AG04449 (cell line): ENCODE measurements at regions of chr17 and their contacts with region 1.

Region 1: DNA sequence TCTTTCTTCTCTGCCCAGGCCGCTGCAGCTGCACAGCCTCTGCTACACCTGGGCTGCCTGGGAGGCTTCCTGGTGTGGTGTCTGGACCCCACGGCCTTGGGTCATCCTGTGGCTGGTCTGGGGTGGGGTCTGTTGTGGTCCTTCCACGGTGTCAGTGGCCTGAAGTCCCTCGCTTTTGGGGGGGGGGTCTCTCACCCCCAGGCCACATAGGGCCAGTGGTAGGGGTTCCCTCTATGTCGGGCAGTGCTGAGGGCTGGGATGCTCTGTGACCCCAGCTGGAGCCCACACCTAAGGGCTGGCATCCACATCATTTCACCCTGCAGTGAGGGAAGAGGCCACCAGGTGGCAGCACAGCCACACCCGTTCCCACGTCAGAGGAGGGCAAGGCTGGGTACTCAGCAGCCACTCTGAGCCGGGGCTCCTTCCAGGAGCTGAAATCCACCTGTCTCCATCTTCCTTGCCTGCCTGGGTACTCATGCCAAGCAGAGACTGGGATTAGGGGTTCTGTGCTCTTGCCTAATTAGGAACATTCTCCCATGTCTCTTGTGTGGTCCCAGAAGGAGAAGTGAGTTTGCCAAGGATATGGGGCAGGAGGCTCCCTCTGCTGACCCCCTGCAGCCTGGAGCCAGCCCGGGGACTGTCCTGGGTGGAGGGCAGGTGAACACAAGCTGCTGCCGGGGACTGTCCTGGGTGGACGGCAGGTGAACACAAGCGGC is 13.0 kb downstream of the ENGASE start:
- DNase-seq: no peak
- H3K4me3 ChIP-seq: no peak overlapping the region
- CTCF ChIP-seq: peak; percentile 93

Region 2: GRCh38 chr17:79027925-79028813 is 59.4 kb before region 1 on chr17:
- CTCF ChIA-PET with region 1: interaction called, 105 read pairs
- POLR2A ChIA-PET with region 1: no interaction called
- DNase-seq: no peak
- H3K4me3 ChIP-seq: no peak overlapping the region
- CTCF ChIP-seq: peak; percentile 22

Region 3: GRCh38 chr17:79065105-79065670 is 22.4 kb before region 1 on chr17:
- CTCF ChIA-PET with region 1: interaction called, 54 read pairs
- POLR2A ChIA-PET with region 1: no interaction called
- DNase-seq: no peak
- H3K4me3 ChIP-seq: no peak overlapping the region
- CTCF ChIP-seq: peak; percentile 40

Region 4: DNA sequence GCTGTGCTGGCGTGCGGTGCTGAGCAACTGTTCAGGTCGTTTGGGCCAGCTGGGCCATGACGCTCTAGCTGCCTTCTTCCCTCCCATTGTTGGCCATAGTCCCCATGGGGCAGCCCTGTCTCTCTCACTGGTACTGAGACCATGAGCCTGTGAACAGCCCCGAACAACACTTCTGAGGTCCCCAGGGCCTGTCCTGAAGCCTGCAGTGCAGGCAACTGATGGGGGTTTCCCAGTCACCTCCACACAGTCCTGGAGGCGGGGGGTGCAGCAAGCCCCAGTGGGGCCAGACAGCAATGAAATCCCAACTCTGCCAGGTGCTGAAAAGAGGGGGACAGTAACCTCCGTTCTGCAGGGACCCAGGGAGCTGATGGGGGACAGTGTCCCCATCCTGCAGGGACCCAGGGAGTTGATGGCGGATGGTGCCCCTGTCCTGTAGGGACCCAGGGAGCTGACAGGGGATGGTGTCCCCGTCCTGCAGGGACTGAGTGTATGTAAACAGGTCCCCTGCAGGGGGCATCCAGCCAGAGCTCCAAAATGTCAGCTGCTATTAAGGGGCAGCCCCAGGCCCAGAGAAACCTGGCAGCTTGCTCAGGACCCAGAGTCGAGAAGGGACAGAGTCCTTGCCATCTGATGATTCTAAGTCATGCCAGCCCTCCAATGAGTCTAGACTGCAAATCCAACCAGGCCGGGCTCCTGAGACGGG is 17.5 kb after region 1 on chr17:
- CTCF ChIA-PET with region 1: interaction called, 21 read pairs
- POLR2A ChIA-PET with region 1: no interaction called
- DNase-seq: no peak
- H3K4me3 ChIP-seq: no peak overlapping the region
- CTCF ChIP-seq: no peak

Region 5: GRCh38 chr17:79400989-79401703 is 313.6 kb after region 1 on chr17:
- CTCF ChIA-PET with region 1: interaction called, 473 read pairs
- POLR2A ChIA-PET with region 1: no interaction called
- DNase-seq: no peak
- H3K4me3 ChIP-seq: peak overlapping the region; percentile 42
- CTCF ChIP-seq: peak; percentile 90